CD4-positive, alpha-beta memory T cell (primary cell): ENCODE measurements at regions of chr6 and their contacts with region 1.

Region 1: GRCh38 chr6:7910654-7911344 is at the start of gene TXNDC5:
- DNase-seq: peak; percentile 57 to 63 (median 58)
- H3K4me3 ChIP-seq: peak within 1 kb of the TSS; percentile 29 to 70
- H3K4me3 Mint-ChIP-seq: peak within 1 kb of the TSS; percentile 79 to 86 (median 83)
- H3K27ac ChIP-seq: peak within 1 kb of the TSS; percentile 39
- H3K27ac Mint-ChIP-seq: peak within 1 kb of the TSS in 5 of 7 donors; percentile 57 to 86 (median 75)
- H3K4me1 ChIP-seq: peaks cover 17% of the 10 kb centered on the region
- H3K4me1 Mint-ChIP-seq: peaks cover 3 to 15% (median 8%) of the 10 kb centered on the region in 4 donors
- H3K27me3 ChIP-seq: no peaks in the 10 kb centered on the region
- H3K27me3 Mint-ChIP-seq: no peaks in the 10 kb centered on the region
- total RNA-seq, gene TXNDC5: 18.1 to 21.8 TPM

Region 2: GRCh38 chr6:8102122-8102958 is 191.5 kb after region 1 on chr6 and contains the start of gene EEF1E1:
- CTCF ChIA-PET with region 1: no interaction called
- POLR2A ChIA-PET with region 1: interaction called, 3 read pairs
- intact Hi-C with region 1: loop called (anchors 10 kb)
- DNase-seq: peak; percentile 92 to 98 (median 94)
- H3K4me3 ChIP-seq: peak within 1 kb of the TSS; percentile 87 to 95
- H3K4me3 Mint-ChIP-seq: peak within 1 kb of the TSS; percentile 92 to 100 (median 97)
- H3K27ac ChIP-seq: peak within 1 kb of the TSS; percentile 79
- H3K27ac Mint-ChIP-seq: peak within 1 kb of the TSS; percentile 86 to 98 (median 96)
- H3K4me1 ChIP-seq: peaks cover 19% of the 10 kb centered on the region
- H3K4me1 Mint-ChIP-seq: peaks cover 17 to 30% (median 23%) of the 10 kb centered on the region in 4 donors
- H3K27me3 ChIP-seq: no peaks in the 10 kb centered on the region
- H3K27me3 Mint-ChIP-seq: peaks cover 6 to 9% of the 10 kb centered on the region in 2 donors
- total RNA-seq, gene EEF1E1: 14.8 to 20.7 TPM

Region 3: GRCh38 chr6:8243475-8243874 is 332.7 kb after region 1 on chr6:
- CTCF ChIA-PET with region 1: no interaction called
- POLR2A ChIA-PET with region 1: no interaction called
- intact Hi-C with region 1: no loop called
- DNase-seq: no peak
- H3K4me3 ChIP-seq: no peak overlapping the region
- H3K4me3 Mint-ChIP-seq: no peak overlapping the region
- H3K27ac ChIP-seq: no peak overlapping the region
- H3K27ac Mint-ChIP-seq: no peak overlapping the region
- H3K4me1 ChIP-seq: no peaks in the 10 kb centered on the region
- H3K4me1 Mint-ChIP-seq: no peaks in the 10 kb centered on the region
- H3K27me3 ChIP-seq: no peaks in the 10 kb centered on the region
- H3K27me3 Mint-ChIP-seq: peaks cover 1 to 4% of the 10 kb centered on the region in 2 donors